ENCODE measurements at regions of chr9 and their contacts with region 1.

Region 1: DNA sequence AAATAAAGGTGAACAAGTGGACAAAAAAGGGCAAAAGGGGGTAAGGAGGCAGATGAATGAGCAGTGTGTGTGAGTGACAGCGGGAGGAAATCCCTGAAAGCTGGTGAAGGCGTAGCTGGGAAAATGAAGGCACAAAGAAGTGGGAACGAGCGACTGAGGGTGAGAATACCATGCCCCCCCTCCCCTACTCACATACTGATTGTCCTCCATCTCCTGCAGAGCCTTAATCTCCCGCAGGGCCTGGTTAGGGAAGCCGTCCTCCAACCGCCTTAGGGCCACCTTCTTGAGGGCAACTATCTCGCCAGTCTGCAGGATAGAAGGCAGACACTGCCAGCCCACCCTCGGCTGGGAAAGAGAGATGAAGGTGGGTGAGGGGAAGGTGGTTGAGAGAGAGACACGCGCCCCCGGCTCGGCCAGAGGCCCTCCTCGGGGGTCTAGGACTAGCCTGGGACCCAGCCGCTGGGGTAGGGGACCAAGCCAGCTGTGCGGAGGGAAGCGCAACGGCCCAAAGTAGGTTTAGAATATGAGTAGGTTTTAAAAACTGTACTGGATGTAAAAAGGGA is 522 bp downstream of the CDK20 start:
- DNase-seq: no peak
- H3K4me3 Mint-ChIP-seq: peak overlapping the region; percentile 88
- H3K27ac Mint-ChIP-seq: peak overlapping the region; percentile 93
- H3K4me1 Mint-ChIP-seq: peaks cover 14% of the 10 kb centered on the region
- H3K27me3 Mint-ChIP-seq: no peaks in the 10 kb centered on the region
- CTCF ChIP-seq: no peak

Region 2: GRCh38 chr9:87909310-87910041 is 64.3 kb before region 1 on chr9:
- CTCF ChIA-PET with region 1: no interaction called
- POLR2A ChIA-PET with region 1: no interaction called
- intact Hi-C with region 1: no loop called
- DNase-seq: peak; percentile 84
- H3K4me3 Mint-ChIP-seq: no peak overlapping the region
- H3K27ac Mint-ChIP-seq: no peak overlapping the region
- H3K4me1 Mint-ChIP-seq: peaks cover 15% of the 10 kb centered on the region
- H3K27me3 Mint-ChIP-seq: peaks cover 21% of the 10 kb centered on the region
- CTCF ChIP-seq: no peak

Region 3: DNA sequence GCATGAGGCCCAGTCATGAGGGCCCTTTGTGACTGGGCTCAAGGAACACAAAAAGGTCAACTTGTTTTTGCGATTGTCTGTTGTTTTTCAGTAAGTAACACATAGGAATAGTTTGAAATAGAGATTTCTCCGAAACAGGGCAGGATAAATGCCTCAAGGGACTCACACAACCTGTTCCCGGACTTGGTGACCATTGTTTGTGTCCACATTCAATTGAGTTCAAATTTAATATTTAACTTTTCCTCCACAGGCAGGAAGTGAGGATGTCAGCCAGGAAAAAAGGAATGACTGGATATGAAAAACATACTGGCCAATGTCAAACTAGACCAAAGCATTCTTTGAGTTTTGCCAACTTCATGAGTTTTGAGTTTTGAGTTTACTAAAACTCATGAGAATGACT is 91.8 kb after region 1 on chr9:
- CTCF ChIA-PET with region 1: no interaction called
- POLR2A ChIA-PET with region 1: no interaction called
- intact Hi-C with region 1: no loop called
- DNase-seq: no peak
- H3K4me3 Mint-ChIP-seq: no peak overlapping the region
- H3K27ac Mint-ChIP-seq: no peak overlapping the region
- H3K4me1 Mint-ChIP-seq: no peaks in the 10 kb centered on the region
- H3K27me3 Mint-ChIP-seq: no peaks in the 10 kb centered on the region
- CTCF ChIP-seq: no peak

Region 4: GRCh38 chr9:88076286-88077090 is 102.7 kb after region 1 on chr9:
- CTCF ChIA-PET with region 1: no interaction called
- POLR2A ChIA-PET with region 1: interaction called, 18 read pairs
- intact Hi-C with region 1: no loop called
- DNase-seq: peak; percentile 97
- H3K4me3 Mint-ChIP-seq: peak overlapping the region; percentile 85
- H3K27ac Mint-ChIP-seq: peak overlapping the region; percentile 95
- H3K4me1 Mint-ChIP-seq: peaks cover 31% of the 10 kb centered on the region
- H3K27me3 Mint-ChIP-seq: no peaks in the 10 kb centered on the region
- CTCF ChIP-seq: no peak

Region 5: DNA sequence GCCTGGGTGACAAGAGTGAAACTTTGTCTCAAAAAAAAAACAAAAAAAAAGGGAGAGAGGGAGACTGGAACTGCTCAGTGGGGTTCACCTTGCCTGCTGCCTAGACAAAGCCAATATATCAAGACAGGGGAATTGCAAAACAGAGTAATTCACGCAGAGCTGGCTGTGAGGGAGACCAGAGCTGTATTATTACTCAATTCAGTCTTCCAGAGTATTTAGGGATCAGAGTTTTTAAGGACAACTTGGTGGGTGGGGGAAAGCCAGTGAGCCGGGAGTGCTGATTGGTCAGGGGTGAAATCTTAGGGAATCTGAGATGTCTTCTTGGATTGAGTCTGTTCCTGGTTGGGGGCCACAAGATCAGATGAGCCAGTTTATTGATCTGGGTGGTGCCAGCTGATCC is 388.9 kb after region 1 on chr9:
- CTCF ChIA-PET with region 1: no interaction called
- POLR2A ChIA-PET with region 1: no interaction called
- intact Hi-C with region 1: no loop called
- DNase-seq: no peak
- H3K4me3 Mint-ChIP-seq: no peak overlapping the region
- H3K27ac Mint-ChIP-seq: no peak overlapping the region
- H3K4me1 Mint-ChIP-seq: no peaks in the 10 kb centered on the region
- H3K27me3 Mint-ChIP-seq: no peaks in the 10 kb centered on the region
- CTCF ChIP-seq: no peak

Region 6: DNA sequence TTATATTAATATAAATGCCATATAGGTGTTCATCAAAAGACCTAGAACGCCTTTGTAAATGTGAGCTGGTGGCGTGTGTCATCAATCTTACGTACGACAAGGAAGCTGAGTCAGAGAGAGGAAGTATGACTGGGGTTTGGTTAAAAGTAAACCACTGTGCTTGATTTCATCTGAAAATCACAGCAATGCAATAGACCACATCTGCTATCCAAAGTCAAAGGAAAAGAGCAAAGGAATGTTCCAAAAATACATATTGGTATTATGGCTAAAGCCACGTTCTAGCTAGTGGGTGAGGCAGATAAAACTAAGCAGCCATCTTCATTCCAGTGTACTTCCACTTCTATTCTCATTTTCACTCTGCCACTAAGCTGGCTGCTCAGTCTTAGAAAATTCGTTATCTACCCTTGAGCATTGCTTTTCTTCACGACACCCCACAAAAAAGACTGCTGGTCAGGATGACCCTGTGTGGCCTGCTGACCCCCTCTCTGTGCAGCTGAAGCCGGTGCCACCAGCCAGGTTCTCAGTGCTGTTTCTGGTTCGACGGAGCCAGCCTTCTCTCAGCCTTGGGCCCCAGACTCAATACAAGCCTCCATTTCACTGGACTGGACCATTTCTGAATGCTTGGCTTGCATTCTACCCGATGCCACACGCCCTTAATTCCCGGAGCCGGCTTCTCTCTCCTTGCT is 1181.0 kb after region 1 on chr9:
- CTCF ChIA-PET with region 1: no interaction called
- POLR2A ChIA-PET with region 1: no interaction called
- intact Hi-C with region 1: no loop called
- DNase-seq: peak; percentile 81
- H3K4me3 Mint-ChIP-seq: no peak overlapping the region
- H3K27ac Mint-ChIP-seq: peak overlapping the region; percentile 32
- H3K4me1 Mint-ChIP-seq: peaks cover 22% of the 10 kb centered on the region
- H3K27me3 Mint-ChIP-seq: no peaks in the 10 kb centered on the region
- CTCF ChIP-seq: no peak

Measured in MCF 10A (cell line).